ENCODE measurements at regions of chr14 and their contacts with region 1.

Region 1: GRCh38 chr14:30214461-30215090 is 286.9 kb upstream of the PRKD1 start:
- DNase-seq: peak in 3 of 5 donors; percentile 12 to 72 (median 64)
- H3K4me3 ChIP-seq: no peak overlapping the region
- H3K27ac ChIP-seq: no peak overlapping the region
- H3K4me1 ChIP-seq: no peaks in the 10 kb centered on the region
- H3K27me3 ChIP-seq: no peaks in the 10 kb centered on the region
- CTCF ChIP-seq: peak; percentile 56

Region 2: GRCh38 chr14:28751467-28752058 is 1463.0 kb before region 1 on chr14:
- intact Hi-C with region 1: loop called (anchors 10 kb)
- DNase-seq: peak in 3 of 5 donors; percentile 56 to 79 (median 70)
- H3K4me3 ChIP-seq: no peak overlapping the region
- H3K27ac ChIP-seq: no peak overlapping the region
- H3K4me1 ChIP-seq: no peaks in the 10 kb centered on the region
- H3K27me3 ChIP-seq: peaks cover 21% of the 10 kb centered on the region
- CTCF ChIP-seq: peak; percentile 58

Region 3: GRCh38 chr14:29548948-29549370 is 665.6 kb before region 1 on chr14:
- intact Hi-C with region 1: loop called (anchors 10 kb)
- DNase-seq: peak in 2 of 5 donors; percentile 56 to 72
- H3K4me3 ChIP-seq: no peak overlapping the region
- H3K27ac ChIP-seq: no peak overlapping the region
- H3K4me1 ChIP-seq: no peaks in the 10 kb centered on the region
- H3K27me3 ChIP-seq: no peaks in the 10 kb centered on the region
- CTCF ChIP-seq: peak; percentile 48

Region 4: GRCh38 chr14:29627137-29627536 is 587.4 kb before region 1 on chr14:
- intact Hi-C with region 1: no loop called
- DNase-seq: no peak
- H3K4me3 ChIP-seq: no peak overlapping the region
- H3K27ac ChIP-seq: no peak overlapping the region
- H3K4me1 ChIP-seq: no peaks in the 10 kb centered on the region
- H3K27me3 ChIP-seq: no peaks in the 10 kb centered on the region
- CTCF ChIP-seq: no peak

Region 5: DNA sequence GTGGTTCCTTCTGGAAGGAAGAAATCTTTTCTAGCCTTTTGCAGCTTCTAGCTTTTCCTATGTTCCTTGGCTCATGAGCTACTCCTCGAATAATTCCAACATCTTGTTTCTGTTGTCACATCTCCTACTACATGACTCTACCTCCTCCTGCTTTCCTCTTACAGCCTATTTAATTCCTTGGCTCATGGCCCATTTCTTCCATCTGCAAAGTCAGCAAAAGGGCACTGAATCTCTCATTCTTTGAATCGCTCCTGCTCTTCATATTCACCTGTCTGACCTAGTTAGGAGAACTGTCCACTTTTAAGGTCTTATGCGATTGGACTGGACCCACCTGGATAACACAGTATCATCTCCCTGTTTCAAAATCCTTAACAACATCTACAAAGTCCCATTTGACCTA is 302.8 kb before region 1 on chr14:
- intact Hi-C with region 1: no loop called
- DNase-seq: peak in 1 of 5 donors; percentile 28
- H3K4me3 ChIP-seq: no peak overlapping the region
- H3K27ac ChIP-seq: no peak overlapping the region
- H3K4me1 ChIP-seq: peaks cover 0 to 21% (median 0%) of the 10 kb centered on the region in 3 donors
- H3K27me3 ChIP-seq: no peaks in the 10 kb centered on the region
- CTCF ChIP-seq: no peak

Region 6: DNA sequence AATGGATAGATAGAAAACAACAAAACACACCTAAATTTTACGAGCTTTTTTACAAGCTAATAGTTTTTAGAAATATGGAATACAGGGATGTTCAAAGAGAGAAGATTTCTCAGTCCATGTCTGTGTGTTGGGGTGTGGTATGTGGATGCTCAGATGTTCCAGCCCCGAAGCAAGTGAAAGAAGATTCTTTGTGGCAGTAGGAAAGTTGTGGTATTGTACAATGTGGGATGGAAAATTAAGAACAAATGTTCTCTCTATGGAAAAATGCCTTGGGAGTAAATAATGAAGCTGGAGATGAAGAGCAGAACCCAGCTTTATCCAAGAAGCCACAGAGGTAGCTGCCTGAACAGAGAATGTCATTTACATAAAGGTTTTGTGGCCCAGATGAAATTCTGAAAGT is 136.6 kb before region 1 on chr14:
- intact Hi-C with region 1: no loop called
- DNase-seq: no peak
- H3K4me3 ChIP-seq: no peak overlapping the region
- H3K27ac ChIP-seq: no peak overlapping the region
- H3K4me1 ChIP-seq: no peaks in the 10 kb centered on the region
- H3K27me3 ChIP-seq: no peaks in the 10 kb centered on the region
- CTCF ChIP-seq: no peak